OCI-LY7 (cell line): ENCODE measurements at regions of chr1 and their contacts with region 1.

Region 1: GRCh38 chr1:183070923-183071618 is 47.9 kb downstream of the LAMC1 start:
- DNase-seq: peak; percentile 75
- H3K4me3 ChIP-seq: peak overlapping the region; percentile 53
- H3K27ac ChIP-seq: peak overlapping the region; percentile 46
- H3K4me1 ChIP-seq: peaks cover 41% of the 10 kb centered on the region
- CTCF ChIP-seq: peak; percentile 38; the same call in 1 of the 2 replicates

Region 2: DNA sequence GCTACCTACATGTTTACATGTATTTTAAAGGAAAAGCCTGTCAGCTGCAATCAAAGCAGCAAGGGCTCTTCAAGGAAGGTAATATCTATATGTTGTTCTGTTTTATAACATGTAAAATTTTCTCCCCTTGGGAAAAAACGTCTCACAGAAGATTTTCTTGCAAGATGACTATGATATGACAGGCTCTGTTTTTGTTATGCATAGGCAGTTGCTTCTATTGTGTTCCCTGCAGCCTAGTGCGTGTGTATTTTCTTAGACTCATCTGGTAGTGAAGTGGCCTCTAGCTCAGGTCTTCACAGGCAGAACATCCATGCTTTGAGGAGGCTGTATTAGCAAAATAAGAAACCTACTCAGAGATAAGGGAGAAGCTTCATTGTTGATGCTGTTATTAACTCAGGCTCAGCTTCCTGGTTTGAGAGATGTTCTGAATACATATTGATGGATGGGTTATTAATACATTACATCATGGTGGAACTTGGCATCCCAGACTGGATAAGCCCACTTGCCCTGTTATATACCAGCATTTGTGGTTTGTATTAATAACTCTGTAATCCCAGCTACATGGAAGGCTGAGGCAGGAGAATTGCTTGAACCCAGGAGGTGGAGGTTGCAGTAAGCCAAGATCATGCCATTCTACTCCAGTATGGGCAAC is 12.1 kb before region 1 on chr1:
- CTCF ChIA-PET with region 1: interaction called, 3 read pairs
- POLR2A ChIA-PET with region 1: interaction called, 17 read pairs
- intact Hi-C with region 1: no loop called
- DNase-seq: no peak
- H3K4me3 ChIP-seq: no peak overlapping the region
- H3K27ac ChIP-seq: no peak overlapping the region
- H3K4me1 ChIP-seq: peaks cover 10% of the 10 kb centered on the region
- CTCF ChIP-seq: no peak